ENCODE measurements at regions of chr5 and their contacts with region 1.

Region 1: GRCh38 chr5:95822542-95823181 is at the start of gene GLRX:
- DNase-seq: peak; percentile 77
- ATAC-seq: peak; percentile 54
- H3K4me3 Mint-ChIP-seq: peak within 1 kb of the TSS; percentile 97
- H3K27ac Mint-ChIP-seq: peak within 1 kb of the TSS; percentile 88
- H3K4me1 Mint-ChIP-seq: peaks cover 71% of the 10 kb centered on the region
- H3K27me3 Mint-ChIP-seq: no peaks in the 10 kb centered on the region
- total RNA-seq, gene GLRX: 65.4 to 67.4 TPM

Region 2: GRCh38 chr5:95808686-95809413 is 13.8 kb before region 1 on chr5:
- CTCF ChIA-PET with region 1: interaction called, 38 read pairs
- POLR2A ChIA-PET with region 1: interaction called, 53 read pairs
- DNase-seq: peak; percentile 92
- ATAC-seq: peak; percentile 100
- H3K4me3 Mint-ChIP-seq: peak overlapping the region; percentile 58
- H3K27ac Mint-ChIP-seq: peak overlapping the region; percentile 85
- H3K4me1 Mint-ChIP-seq: peaks cover 62% of the 10 kb centered on the region
- H3K27me3 Mint-ChIP-seq: no peaks in the 10 kb centered on the region

Region 3: GRCh38 chr5:95835682-95836385 is 13.2 kb after region 1 on chr5:
- CTCF ChIA-PET with region 1: interaction called, 111 read pairs
- POLR2A ChIA-PET with region 1: interaction called, 46 read pairs
- DNase-seq: no peak
- ATAC-seq: no peak
- H3K4me3 Mint-ChIP-seq: peak overlapping the region; percentile 80
- H3K27ac Mint-ChIP-seq: peak overlapping the region; percentile 94
- H3K4me1 Mint-ChIP-seq: peaks cover 60% of the 10 kb centered on the region
- H3K27me3 Mint-ChIP-seq: no peaks in the 10 kb centered on the region

Measured in activated CD8-positive, alpha-beta T cell treated with anti-CD3 and anti-CD28 coated beads, Interleukin-2, amount 10 ng/mL, durations not matched to agents 7 days and 5 days (primary cell).